ENCODE measurements at regions of chr9 and their contacts with region 1.

Region 1: DNA sequence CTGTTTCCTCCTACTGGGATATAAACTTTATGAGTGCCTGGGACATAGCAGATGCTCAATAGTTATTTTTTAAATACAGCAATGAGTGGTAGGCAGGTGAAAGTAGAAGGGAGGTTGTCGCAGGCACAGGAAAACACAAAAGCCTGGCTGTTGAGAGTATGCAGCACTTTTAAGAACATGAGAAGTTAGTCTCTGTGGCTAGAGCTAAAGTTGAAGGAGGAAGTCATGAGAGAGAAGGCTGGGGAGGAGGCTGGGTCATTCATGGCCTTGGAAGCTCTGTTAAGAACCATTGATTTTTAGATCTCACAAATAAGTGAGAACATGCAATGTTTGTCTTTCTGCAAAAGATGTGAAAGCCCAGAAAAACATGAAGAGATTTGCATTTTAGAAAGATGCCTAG is 126.7 kb downstream of the PRKACG start:
- DNase-seq: no peak
- ATAC-seq: no peak
- H3K4me3 ChIP-seq: no peak overlapping the region
- H3K27ac ChIP-seq: no peak overlapping the region
- H3K4me1 ChIP-seq: no peaks in the 10 kb centered on the region
- H3K27me3 ChIP-seq: no peaks in the 10 kb centered on the region
- CTCF ChIP-seq: no peak

Region 2: GRCh38 chr9:68805890-68806517 is 81.2 kb before region 1 on chr9:
- intact Hi-C with region 1: no loop called
- DNase-seq: no peak
- ATAC-seq: peak; percentile 22 to 74 (median 52)
- H3K4me3 ChIP-seq: no peak overlapping the region
- H3K27ac ChIP-seq: peak overlapping the region; percentile 20 to 91 (median 78)
- H3K4me1 ChIP-seq: peaks cover 5 to 51% (median 24%) of the 10 kb centered on the region in 9 donors
- H3K27me3 ChIP-seq: no peaks in the 10 kb centered on the region
- CTCF ChIP-seq: no peak

Region 3: DNA sequence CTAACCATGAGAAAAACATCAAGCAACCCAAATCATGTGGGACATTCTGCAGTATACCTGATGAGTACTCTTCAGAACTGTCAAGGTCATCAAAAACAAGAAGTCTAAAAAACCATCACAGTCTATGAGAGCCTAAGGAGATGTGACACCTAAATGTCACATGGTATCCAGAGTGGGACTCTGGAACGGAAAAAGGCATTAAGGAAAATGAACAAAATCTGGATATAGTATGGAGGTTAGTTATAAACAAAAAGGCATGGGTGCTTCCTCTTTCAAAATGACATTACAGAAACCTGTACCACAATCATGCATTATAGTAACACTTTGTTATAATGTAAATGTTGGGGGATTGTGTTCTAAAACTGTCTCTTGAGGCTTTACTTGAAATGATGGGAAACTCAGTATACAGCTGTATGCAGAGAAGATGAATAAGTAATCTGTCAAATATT is 79.3 kb after region 1 on chr9:
- intact Hi-C with region 1: loop called in 1 of 10 experiments (anchors 10 kb)
- DNase-seq: no peak
- ATAC-seq: no peak
- H3K4me3 ChIP-seq: no peak overlapping the region
- H3K27ac ChIP-seq: peak overlapping the region in 3 of 10 donors; percentile 0 to 8 (median 3)
- H3K4me1 ChIP-seq: peaks cover 0 to 64% (median 12%) of the 10 kb centered on the region in 9 donors
- H3K27me3 ChIP-seq: no peaks in the 10 kb centered on the region
- CTCF ChIP-seq: no peak

Region 4: DNA sequence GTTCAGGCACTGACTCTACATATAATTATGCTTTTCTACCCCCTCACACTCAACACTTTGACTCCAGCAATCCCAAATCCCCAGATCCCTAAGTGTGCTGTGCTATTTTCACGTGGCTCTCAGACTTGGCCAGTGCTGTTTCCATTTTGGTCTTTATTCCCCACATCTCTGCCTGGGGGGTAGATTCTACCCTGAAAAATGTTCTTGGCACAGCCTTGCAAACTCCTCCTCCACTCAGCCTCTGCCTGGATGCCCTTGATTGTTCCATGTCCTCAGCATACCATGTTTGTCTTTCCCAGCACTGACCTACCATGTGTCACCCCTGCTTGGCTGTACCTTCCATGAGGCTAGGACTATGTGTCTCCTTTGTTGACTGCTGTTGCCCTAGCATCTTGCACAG is 191.3 kb after region 1 on chr9:
- intact Hi-C with region 1: no loop called
- DNase-seq: peak in 1 of 2 donors; percentile 58
- ATAC-seq: peak; percentile 83 to 98 (median 93)
- H3K4me3 ChIP-seq: no peak overlapping the region
- H3K27ac ChIP-seq: peak overlapping the region; percentile 36 to 85 (median 72)
- H3K4me1 ChIP-seq: peaks cover 0 to 41% (median 21%) of the 10 kb centered on the region in 9 donors
- H3K27me3 ChIP-seq: no peaks in the 10 kb centered on the region
- CTCF ChIP-seq: no peak